GM10248 (cell line): ENCODE measurements at regions of chr4 and their contacts with region 1.

Region 1: GRCh38 chr4:70183168-70183939 is 12.2 kb upstream of the ODAM start:
- DNase-seq: peak; percentile 14
- CTCF ChIP-seq: peak; percentile 74

Region 2: DNA sequence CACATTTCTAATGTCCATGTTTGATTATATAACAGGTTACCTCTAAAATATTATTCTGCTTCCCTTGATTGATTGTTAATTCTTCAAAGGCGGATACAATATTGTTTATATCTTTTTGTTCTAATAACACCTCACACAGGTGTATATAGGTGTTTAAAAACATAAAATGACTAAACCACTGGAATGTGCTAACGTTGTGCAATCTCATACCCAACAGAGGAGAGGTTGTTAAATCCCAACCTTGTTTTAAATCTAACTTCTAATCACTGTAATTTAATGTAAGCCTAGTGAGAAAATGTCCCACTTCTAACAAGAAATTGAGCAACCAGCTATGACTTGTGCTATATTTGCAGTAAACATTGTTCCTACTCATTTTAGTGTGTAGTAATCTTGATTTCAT is 13.5 kb after region 1 on chr4:
- CTCF ChIA-PET with region 1: interaction called, 16 read pairs
- POLR2A ChIA-PET with region 1: no interaction called
- DNase-seq: no peak
- CTCF ChIP-seq: no peak